ENCODE measurements at regions of chr1 and their contacts with region 1.

Region 1: GRCh38 chr1:15100121-15100874 is 53.2 kb upstream of the TMEM51 start:
- DNase-seq: peak; percentile 57
- ATAC-seq: peak; percentile 86
- H3K4me3 ChIP-seq: no peak overlapping the region
- H3K27ac ChIP-seq: no peak overlapping the region
- H3K4me1 ChIP-seq: 0 out of 2 replicates have a peak, but pooled peaks cover 3% of the 10 kb centered on the region
- H3K27me3 ChIP-seq: peaks cover 2% of the 10 kb centered on the region
- CTCF ChIP-seq: peak; percentile 95

Region 2: DNA sequence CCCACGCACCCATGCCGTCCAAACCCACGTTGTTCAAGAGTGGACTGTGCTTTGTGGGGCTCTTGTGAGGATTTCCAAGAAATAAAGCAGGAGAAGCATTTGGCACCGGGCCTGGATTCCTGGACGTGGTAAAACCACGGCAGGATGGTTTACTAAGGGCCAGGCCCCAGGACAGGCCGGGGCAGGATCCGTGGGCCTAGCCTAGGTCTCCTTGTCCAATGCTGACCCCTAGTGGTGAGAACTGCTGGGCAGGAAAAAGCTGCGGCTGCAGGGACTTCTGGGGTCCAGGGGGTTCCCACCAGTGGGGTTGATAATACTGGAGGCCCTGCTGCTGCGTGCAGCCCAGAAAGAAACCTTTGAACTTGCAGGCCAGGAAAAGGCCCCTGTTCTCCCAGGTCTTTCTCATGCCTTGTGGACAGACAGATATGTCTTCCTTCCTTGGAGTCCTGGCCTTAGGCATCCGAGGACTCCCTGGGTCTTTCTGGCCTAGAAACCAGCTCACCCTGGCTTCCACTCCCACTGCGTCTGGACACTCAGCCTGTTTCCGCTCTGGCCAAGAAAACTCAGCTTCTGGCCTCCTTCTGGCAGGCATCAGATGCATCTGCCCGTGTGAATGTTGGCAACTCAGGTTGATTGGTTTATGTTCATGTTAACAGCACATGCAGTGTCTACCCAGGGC is 53.7 kb before region 1 on chr1:
- CTCF ChIA-PET with region 1: no interaction called
- POLR2A ChIA-PET with region 1: interaction called, 10 read pairs
- in situ Hi-C with region 1: no loop called
- intact Hi-C with region 1: no loop called
- DNase-seq: peak; percentile 24
- ATAC-seq: peak; percentile 82
- H3K4me3 ChIP-seq: no peak overlapping the region
- H3K27ac ChIP-seq: no peak overlapping the region
- H3K4me1 ChIP-seq: no peaks in the 10 kb centered on the region
- H3K27me3 ChIP-seq: no peaks in the 10 kb centered on the region
- CTCF ChIP-seq: peak; percentile 95

Region 3: GRCh38 chr1:15062479-15063099 is 37.7 kb before region 1 on chr1:
- CTCF ChIA-PET with region 1: no interaction called
- POLR2A ChIA-PET with region 1: no interaction called
- in situ Hi-C with region 1: no loop called
- intact Hi-C with region 1: loop called (anchors 1 kb)
- DNase-seq: no peak
- ATAC-seq: no peak
- H3K4me3 ChIP-seq: no peak overlapping the region
- H3K27ac ChIP-seq: no peak overlapping the region
- H3K4me1 ChIP-seq: no peaks in the 10 kb centered on the region
- H3K27me3 ChIP-seq: no peaks in the 10 kb centered on the region
- CTCF ChIP-seq: peak; percentile 82

Region 4: DNA sequence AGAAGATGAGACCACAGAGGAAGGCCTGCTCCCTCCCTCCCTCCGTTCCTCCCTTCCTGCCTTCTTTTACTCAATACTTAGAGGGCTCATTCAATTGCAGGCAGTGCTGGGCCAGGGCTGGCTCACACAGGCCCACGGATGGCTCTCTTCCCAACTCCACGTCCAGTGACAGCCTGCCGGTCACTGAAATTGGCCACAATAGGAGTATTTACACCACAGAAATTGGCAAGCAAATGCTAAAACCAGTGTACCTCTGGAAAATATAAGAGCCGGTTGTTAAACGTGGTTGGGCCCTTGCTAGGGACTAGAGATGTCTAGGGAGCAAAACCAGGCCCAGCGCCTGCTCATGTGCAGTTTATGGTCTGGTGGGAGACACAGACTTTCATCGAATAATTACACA is 19.2 kb before region 1 on chr1:
- CTCF ChIA-PET with region 1: no interaction called
- POLR2A ChIA-PET with region 1: no interaction called
- in situ Hi-C with region 1: no loop called
- intact Hi-C with region 1: loop called (anchors 2 kb)
- DNase-seq: no peak
- ATAC-seq: no peak
- H3K4me3 ChIP-seq: no peak overlapping the region
- H3K27ac ChIP-seq: no peak overlapping the region
- H3K4me1 ChIP-seq: no peaks in the 10 kb centered on the region
- H3K27me3 ChIP-seq: no peaks in the 10 kb centered on the region
- CTCF ChIP-seq: no peak